ENCODE measurements at regions of chr19 and their contacts with region 1.

Region 1: DNA sequence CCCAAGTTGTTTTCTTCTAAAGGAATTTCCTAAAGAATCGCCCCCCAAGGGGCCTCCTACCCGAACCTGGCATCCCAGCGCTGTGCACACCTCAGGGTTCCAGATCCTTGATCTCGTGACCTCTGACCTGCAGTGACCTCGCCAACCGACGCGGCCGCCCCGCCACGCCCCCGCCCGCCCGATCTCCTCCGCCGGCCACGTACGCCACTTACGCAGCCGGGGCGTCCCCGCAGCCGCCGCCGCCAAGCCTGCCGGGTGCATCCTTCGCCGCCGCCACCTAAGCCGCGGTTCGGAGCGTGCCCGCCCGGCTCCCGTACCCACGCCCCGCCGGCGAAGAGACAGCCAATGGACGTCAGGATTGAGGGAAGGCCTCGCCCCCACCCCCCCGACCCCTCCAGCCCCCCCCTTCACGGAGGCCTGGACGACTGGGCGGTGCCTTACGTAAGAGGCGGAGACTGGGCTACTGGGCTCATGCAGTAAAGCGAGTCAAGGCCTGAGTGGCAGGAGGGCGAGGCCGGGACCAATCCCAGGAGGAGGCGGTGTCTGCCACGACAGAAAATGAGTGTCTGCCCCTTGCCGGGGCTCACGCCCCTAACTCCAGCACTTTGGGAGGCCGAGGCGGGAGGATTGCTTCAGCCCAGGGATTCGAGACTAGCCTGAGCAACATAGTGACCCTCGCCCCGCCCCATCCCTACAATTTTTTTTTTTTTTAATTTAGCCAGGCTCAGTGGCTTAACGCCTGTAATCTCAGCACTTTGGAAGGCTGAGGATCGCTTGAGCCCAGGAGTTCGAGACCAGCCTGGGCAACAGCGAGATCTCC is at the start of gene YIF1B:
- DNase-seq: peak; percentile 98
- H3K4me3 Mint-ChIP-seq: peak within 1 kb of the TSS; percentile 89
- H3K27ac Mint-ChIP-seq: peak within 1 kb of the TSS; percentile 94
- H3K4me1 Mint-ChIP-seq: peaks cover 47% of the 10 kb centered on the region
- H3K27me3 Mint-ChIP-seq: no peaks in the 10 kb centered on the region
- total RNA-seq, gene YIF1B: 83.4 and 84.7 TPM in 2 replicates

Region 2: GRCh38 chr19:38239816-38240215 is 76.1 kb before region 1 on chr19:
- intact Hi-C with region 1: loop called (anchors 5 kb)
- DNase-seq: no peak
- H3K4me3 Mint-ChIP-seq: no peak overlapping the region
- H3K27ac Mint-ChIP-seq: no peak overlapping the region
- H3K4me1 Mint-ChIP-seq: peaks cover 5% of the 10 kb centered on the region
- H3K27me3 Mint-ChIP-seq: peaks cover 5% of the 10 kb centered on the region

Region 3: DNA sequence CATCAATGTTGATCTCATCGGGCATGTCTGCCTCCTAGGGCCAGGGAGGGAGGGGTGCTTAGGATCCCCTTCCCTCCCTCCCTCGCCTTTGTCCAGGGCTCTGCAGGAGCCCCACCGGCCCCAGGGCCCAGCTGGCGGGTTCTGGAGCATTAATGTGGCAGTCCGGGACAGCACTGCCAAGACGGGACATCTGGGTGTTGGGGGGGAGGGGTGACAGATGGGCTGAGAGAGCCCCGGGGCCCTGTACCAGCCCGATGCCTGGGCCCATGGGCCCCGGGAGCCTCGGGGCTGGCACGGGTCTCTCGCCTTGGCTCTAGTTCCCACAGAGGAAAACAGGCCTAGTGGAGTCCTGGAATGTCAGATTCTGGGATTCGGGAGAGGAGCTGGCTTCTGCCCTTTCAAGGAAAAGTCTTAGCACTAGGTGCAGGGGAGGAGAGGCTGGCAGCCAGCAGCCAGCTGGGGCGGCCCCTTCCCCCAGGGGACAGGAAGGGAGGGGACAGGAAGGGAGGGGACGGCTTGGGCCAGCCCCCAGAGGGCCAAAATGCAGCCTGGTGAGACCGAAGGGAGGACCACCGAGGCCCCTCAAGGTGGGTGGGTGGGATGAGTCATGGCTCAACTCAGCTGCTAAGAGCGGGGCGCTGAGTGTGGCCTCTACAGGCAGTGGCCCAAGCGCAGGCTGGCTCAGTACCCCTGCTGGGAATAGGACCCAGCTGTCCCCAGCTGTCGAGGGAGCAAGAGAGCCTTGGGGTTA is 62.8 kb before region 1 on chr19:
- intact Hi-C with region 1: no loop called
- DNase-seq: peak; percentile 78
- H3K4me3 Mint-ChIP-seq: peak overlapping the region; percentile 58
- H3K27ac Mint-ChIP-seq: peak overlapping the region; percentile 71
- H3K4me1 Mint-ChIP-seq: peaks cover 26% of the 10 kb centered on the region
- H3K27me3 Mint-ChIP-seq: peaks cover 12% of the 10 kb centered on the region

Region 4: DNA sequence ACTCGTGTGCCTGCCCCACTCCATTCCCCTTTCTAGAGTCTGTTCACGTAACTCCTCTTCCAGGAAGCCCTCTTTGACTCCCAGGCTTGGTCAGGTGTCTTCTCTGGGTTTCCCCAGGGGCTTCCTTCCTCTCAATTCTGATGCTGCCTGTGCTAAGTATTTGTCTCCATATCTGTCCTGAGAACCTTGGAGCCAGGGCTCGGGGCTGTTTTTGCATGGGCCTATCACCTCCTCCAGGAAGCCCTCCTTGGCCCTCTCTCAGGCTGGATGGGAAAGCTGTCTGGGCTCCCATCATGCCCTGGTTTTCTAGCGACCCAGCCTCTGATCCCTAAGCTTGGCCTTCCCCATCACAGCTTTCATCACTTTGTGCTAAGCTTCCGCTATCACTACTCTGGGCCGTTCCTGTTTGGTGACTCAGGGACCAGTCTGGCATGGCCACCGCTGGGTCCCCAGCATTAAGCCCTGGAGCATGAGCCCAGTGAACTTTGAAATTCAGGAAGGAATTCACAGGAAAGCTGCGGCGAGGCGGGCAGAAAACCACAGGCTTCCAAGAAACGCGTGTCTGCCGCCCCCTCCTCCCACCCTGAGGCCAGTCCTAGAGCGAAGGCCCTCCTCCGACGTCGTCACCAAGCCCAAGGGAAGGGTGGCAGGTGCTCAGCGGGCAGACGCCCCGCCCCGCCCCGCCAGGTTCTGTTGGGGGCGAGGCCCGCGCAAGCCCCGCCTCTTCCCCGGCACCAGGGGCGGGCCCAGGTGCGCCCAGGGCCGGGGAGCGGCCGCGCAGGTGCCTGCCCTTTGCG is 52.0 kb before region 1 on chr19:
- intact Hi-C with region 1: loop called (anchors 2 kb)
- DNase-seq: peak; percentile 94
- H3K4me3 Mint-ChIP-seq: peak overlapping the region; percentile 88
- H3K27ac Mint-ChIP-seq: peak overlapping the region; percentile 95
- H3K4me1 Mint-ChIP-seq: peaks cover 39% of the 10 kb centered on the region
- H3K27me3 Mint-ChIP-seq: no peaks in the 10 kb centered on the region

Region 5: DNA sequence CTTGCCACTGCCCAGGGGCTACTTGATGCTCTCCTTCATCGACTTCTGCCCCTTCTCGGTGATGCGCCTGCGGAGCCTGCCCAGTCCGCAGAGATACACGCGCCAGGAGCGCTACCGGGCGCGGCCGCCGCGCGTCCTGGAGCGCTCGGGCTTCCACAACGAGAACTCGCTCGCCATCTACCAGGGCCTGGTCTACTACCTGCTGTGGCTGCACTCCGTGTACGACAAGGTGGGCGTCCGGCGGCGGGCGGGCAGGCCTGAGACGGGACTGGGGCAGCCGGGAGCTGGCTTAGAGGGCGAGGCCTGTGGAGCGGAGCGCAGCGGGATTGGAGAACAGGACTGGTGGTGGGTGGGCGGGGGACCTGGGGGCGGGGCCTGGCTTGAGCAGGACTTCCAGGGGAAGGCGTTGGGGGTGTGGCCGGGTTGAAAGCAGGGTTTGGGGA is 45.8 kb after region 1 on chr19:
- intact Hi-C with region 1: loop called (anchors 1 kb)
- DNase-seq: peak; percentile 93
- H3K4me3 Mint-ChIP-seq: peak overlapping the region; percentile 92
- H3K27ac Mint-ChIP-seq: peak overlapping the region; percentile 67
- H3K4me1 Mint-ChIP-seq: peaks cover 10% of the 10 kb centered on the region
- H3K27me3 Mint-ChIP-seq: peaks cover 31% of the 10 kb centered on the region

Region 6: GRCh38 chr19:38374429-38375176 is 58.7 kb after region 1 on chr19 and contains the start of gene PSMD8:
- intact Hi-C with region 1: loop called (anchors 1 kb)
- DNase-seq: peak; percentile 100
- H3K4me3 Mint-ChIP-seq: peak within 1 kb of the TSS; percentile 100
- H3K27ac Mint-ChIP-seq: peak within 1 kb of the TSS; percentile 98
- H3K4me1 Mint-ChIP-seq: peaks cover 21% of the 10 kb centered on the region
- H3K27me3 Mint-ChIP-seq: no peaks in the 10 kb centered on the region
- total RNA-seq, gene PSMD8: 314 and 315 TPM in 2 replicates